ENCODE measurements at regions of chr19 and their contacts with region 1.

Region 1: GRCh38 chr19:6767357-6768235 is at the start of gene SH2D3A:
- DNase-seq: peak; percentile 80 to 98 (median 97)
- ATAC-seq: peak; percentile 84
- H3K4me3 ChIP-seq: peak within 1 kb of the TSS; percentile 82
- H3K4me3 Mint-ChIP-seq: peak within 1 kb of the TSS; percentile 88 to 99 (median 94)
- H3K27ac ChIP-seq: peak within 1 kb of the TSS; percentile 91
- H3K27ac Mint-ChIP-seq: peak within 1 kb of the TSS; percentile 89 to 98 (median 95)
- H3K4me1 ChIP-seq: peaks cover 24 to 41% of the 10 kb centered on the region in 2 donors
- H3K4me1 Mint-ChIP-seq: peaks cover 28 to 65% (median 55%) of the 10 kb centered on the region in 7 donors
- H3K27me3 ChIP-seq: no peaks in the 10 kb centered on the region
- H3K27me3 Mint-ChIP-seq: no peaks in the 10 kb centered on the region
- total RNA-seq, gene SH2D3A: 27.9 to 64.7 (median 57.4) TPM

Region 2: GRCh38 chr19:6424939-6425731 is 342.5 kb before region 1 on chr19:
- CTCF ChIA-PET with region 1: no interaction called
- POLR2A ChIA-PET with region 1: no interaction called
- intact Hi-C with region 1: loop called in 1 of 2 experiments (anchors 1 kb)
- DNase-seq: peak; percentile 66 to 100 (median 99)
- ATAC-seq: peak; percentile 89
- H3K4me3 ChIP-seq: peak overlapping the region; percentile 39
- H3K4me3 Mint-ChIP-seq: peak overlapping the region; percentile 69 to 87 (median 78)
- H3K27ac ChIP-seq: peak overlapping the region; percentile 77
- H3K27ac Mint-ChIP-seq: peak overlapping the region; percentile 78 to 97 (median 94)
- H3K4me1 ChIP-seq: peaks cover 15 to 32% of the 10 kb centered on the region in 2 donors
- H3K4me1 Mint-ChIP-seq: peaks cover 18 to 48% (median 41%) of the 10 kb centered on the region in 7 donors
- H3K27me3 ChIP-seq: no peaks in the 10 kb centered on the region
- H3K27me3 Mint-ChIP-seq: no peaks in the 10 kb centered on the region

Region 3: GRCh38 chr19:6718741-6719539 is 48.7 kb before region 1 on chr19:
- CTCF ChIA-PET with region 1: no interaction called
- POLR2A ChIA-PET with region 1: no interaction called
- intact Hi-C with region 1: loop called in 1 of 2 experiments (anchors 2 kb)
- DNase-seq: peak in 4 of 9 donors; percentile 10 to 38 (median 31)
- ATAC-seq: peak; percentile 73
- H3K4me3 ChIP-seq: no peak overlapping the region
- H3K4me3 Mint-ChIP-seq: no peak overlapping the region
- H3K27ac ChIP-seq: no peak overlapping the region
- H3K27ac Mint-ChIP-seq: peak overlapping the region in 1 of 9 donors; percentile 4
- H3K4me1 ChIP-seq: no peaks in the 10 kb centered on the region
- H3K4me1 Mint-ChIP-seq: peaks cover 10 to 30% (median 21%) of the 10 kb centered on the region in 7 donors
- H3K27me3 ChIP-seq: no peaks in the 10 kb centered on the region
- H3K27me3 Mint-ChIP-seq: peaks cover 0 to 4% (median 0%) of the 10 kb centered on the region in 5 donors

Region 4: DNA sequence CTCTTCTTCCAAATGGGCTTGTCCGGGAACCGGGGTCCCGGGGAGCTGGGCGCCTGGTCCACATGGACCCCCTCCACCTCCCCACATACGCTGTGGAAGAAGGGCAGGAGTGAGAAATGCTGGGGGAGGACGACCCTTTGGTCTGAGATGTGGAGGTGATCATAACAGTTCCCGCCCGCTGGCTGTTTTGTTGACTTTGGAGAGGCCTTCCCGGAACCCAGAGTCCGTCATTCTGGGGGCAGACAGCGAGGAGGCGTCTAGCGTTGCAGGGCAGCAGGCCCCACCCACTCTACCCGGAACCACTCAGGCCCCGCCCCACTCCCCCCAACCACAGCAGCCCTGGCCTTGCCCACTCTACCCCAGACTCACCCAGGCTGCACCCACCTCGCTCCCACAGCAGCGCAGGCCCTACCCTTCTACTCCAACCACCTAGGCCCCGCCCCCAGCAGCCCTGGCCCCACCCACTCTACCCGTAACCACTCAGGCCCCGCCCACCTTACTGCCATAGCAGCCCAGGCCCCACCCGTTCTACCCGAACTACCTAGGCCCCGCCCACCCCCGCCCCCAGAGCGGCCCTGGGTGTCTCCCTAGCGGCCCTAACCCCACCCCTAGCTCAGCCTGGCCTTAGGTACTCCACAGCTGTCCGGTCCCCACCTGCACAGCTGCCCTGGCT is 37.3 kb before region 1 on chr19:
- CTCF ChIA-PET with region 1: no interaction called
- POLR2A ChIA-PET with region 1: no interaction called
- intact Hi-C with region 1: no loop called
- DNase-seq: peak in 1 of 9 donors; percentile 48
- ATAC-seq: peak; percentile 54
- H3K4me3 ChIP-seq: no peak overlapping the region
- H3K4me3 Mint-ChIP-seq: no peak overlapping the region
- H3K27ac ChIP-seq: no peak overlapping the region
- H3K27ac Mint-ChIP-seq: no peak overlapping the region
- H3K4me1 ChIP-seq: no peaks in the 10 kb centered on the region
- H3K4me1 Mint-ChIP-seq: peaks cover 0 to 19% (median 4%) of the 10 kb centered on the region in 7 donors
- H3K27me3 ChIP-seq: no peaks in the 10 kb centered on the region
- H3K27me3 Mint-ChIP-seq: no peaks in the 10 kb centered on the region

Region 5: DNA sequence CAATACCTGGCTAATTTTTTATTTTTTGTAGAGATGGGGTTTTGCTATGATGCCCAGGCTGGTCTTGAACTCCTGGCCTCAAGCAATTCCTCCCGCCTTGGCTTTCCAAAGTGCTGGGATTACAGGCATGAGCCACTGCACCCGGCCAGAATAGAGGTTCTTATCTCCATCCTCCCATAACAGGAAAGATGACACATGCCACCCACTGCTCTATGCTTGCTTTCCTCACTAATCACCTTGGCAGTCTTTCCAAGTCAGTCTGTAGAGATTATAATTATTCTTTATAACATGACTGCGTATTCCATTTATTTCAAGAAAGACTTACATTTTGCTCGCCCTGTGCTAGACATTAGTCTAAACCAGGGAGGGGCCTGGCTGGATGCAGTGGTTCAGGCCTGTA is 11.6 kb after region 1 on chr19:
- CTCF ChIA-PET with region 1: no interaction called
- POLR2A ChIA-PET with region 1: interaction called, 13 read pairs
- intact Hi-C with region 1: no loop called
- DNase-seq: no peak
- ATAC-seq: no peak
- H3K4me3 ChIP-seq: no peak overlapping the region
- H3K4me3 Mint-ChIP-seq: peak overlapping the region in 3 of 10 donors; percentile 39 to 51 (median 40)
- H3K27ac ChIP-seq: peak overlapping the region; percentile 40
- H3K27ac Mint-ChIP-seq: peak overlapping the region in 6 of 9 donors; percentile 32 to 85 (median 68)
- H3K4me1 ChIP-seq: peaks cover 22 to 38% of the 10 kb centered on the region in 2 donors
- H3K4me1 Mint-ChIP-seq: peaks cover 46 to 80% (median 68%) of the 10 kb centered on the region in 7 donors
- H3K27me3 ChIP-seq: no peaks in the 10 kb centered on the region
- H3K27me3 Mint-ChIP-seq: no peaks in the 10 kb centered on the region

Region 6: GRCh38 chr19:6801485-6802086 is 34.0 kb after region 1 on chr19:
- CTCF ChIA-PET with region 1: interaction called, 7 read pairs
- POLR2A ChIA-PET with region 1: interaction called, 53 read pairs
- intact Hi-C with region 1: loop called (anchors 1 kb)
- DNase-seq: peak; percentile 58 to 90 (median 85)
- ATAC-seq: peak; percentile 78
- H3K4me3 ChIP-seq: peak overlapping the region; percentile 67
- H3K4me3 Mint-ChIP-seq: peak overlapping the region; percentile 87 to 99 (median 94)
- H3K27ac ChIP-seq: peak overlapping the region; percentile 85
- H3K27ac Mint-ChIP-seq: peak overlapping the region; percentile 93 to 99 (median 97)
- H3K4me1 ChIP-seq: peaks cover 28 to 35% of the 10 kb centered on the region in 2 donors
- H3K4me1 Mint-ChIP-seq: peaks cover 46 to 85% (median 68%) of the 10 kb centered on the region in 7 donors
- H3K27me3 ChIP-seq: no peaks in the 10 kb centered on the region
- H3K27me3 Mint-ChIP-seq: no peaks in the 10 kb centered on the region